Calu3 (cell line): ENCODE measurements at regions of chr9 and their contacts with region 1.

Region 1: DNA sequence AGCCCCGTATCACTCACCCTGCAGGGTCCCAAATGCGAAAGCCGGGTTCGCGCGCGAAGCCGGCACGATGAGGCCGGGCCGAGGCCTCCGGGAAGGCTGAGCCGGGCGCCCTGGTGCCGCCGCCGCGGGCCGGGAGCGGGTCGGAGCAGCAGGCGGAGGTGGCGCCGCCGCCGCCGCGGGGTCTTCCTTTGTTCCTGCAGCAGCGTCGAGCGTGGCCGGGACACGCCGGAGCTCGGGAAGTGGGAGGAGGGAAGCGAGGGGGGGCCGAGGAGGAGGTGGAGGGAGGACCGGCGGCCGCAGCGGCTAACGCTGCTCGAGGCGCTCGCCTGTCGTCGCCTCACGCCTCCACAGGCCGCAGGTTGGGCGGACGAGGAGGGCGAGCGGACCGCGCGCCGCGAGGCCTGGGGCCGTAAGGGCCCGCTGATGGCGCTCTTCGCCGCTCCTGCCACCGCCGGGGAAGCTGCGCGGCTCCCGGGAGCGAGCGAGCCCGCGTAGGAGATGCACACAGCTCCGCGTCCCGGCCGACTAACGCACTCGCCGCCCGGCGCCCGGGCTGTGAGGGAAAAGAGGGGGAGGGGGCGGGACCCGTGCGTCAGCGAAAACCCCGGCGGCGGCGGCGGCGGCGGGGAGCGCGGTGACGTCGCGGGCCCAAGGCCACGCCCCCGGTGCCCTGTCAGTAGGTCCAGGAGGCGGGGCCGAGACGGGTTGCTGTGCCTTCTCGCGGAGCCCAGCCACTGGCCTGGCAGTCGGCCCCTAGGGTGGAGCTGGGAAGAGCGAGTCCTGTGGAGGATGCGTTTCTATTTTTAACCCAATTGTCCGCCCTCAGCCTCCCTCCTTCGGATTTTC is at the start of gene ZFAND5:
- DNase-seq: peak; percentile 94
- H3K4me3 Mint-ChIP-seq: peak within 1 kb of the TSS; percentile 94
- H3K27ac Mint-ChIP-seq: peak within 1 kb of the TSS; percentile 99
- H3K4me1 Mint-ChIP-seq: no peaks in the 10 kb centered on the region
- H3K27me3 Mint-ChIP-seq: no peaks in the 10 kb centered on the region
- CTCF ChIP-seq: no peak
- total RNA-seq, gene ZFAND5: 113 and 115 TPM in 2 replicates

Region 2: GRCh38 chr9:72292256-72292682 is 72.6 kb before region 1 on chr9:
- CTCF ChIA-PET with region 1: interaction called, 8 read pairs
- intact Hi-C with region 1: loop called (anchors 1 kb)
- DNase-seq: peak; percentile 12
- H3K4me3 Mint-ChIP-seq: peak overlapping the region; percentile 50
- H3K27ac Mint-ChIP-seq: peak overlapping the region; percentile 97
- H3K4me1 Mint-ChIP-seq: peaks cover 33% of the 10 kb centered on the region
- H3K27me3 Mint-ChIP-seq: no peaks in the 10 kb centered on the region
- CTCF ChIP-seq: no peak

Region 3: GRCh38 chr9:72379121-72379520 is 14.2 kb after region 1 on chr9:
- CTCF ChIA-PET with region 1: no interaction called
- intact Hi-C with region 1: no loop called
- DNase-seq: no peak
- H3K4me3 Mint-ChIP-seq: no peak overlapping the region
- H3K27ac Mint-ChIP-seq: no peak overlapping the region
- H3K4me1 Mint-ChIP-seq: no peaks in the 10 kb centered on the region
- H3K27me3 Mint-ChIP-seq: no peaks in the 10 kb centered on the region
- CTCF ChIP-seq: no peak

Region 4: GRCh38 chr9:72526901-72527800 is 162.2 kb after region 1 on chr9:
- CTCF ChIA-PET with region 1: interaction called, 3 read pairs
- intact Hi-C with region 1: loop called (anchors 5 kb)
- DNase-seq: peak; percentile 77
- H3K4me3 Mint-ChIP-seq: peak overlapping the region; percentile 49
- H3K27ac Mint-ChIP-seq: peak overlapping the region; percentile 70
- H3K4me1 Mint-ChIP-seq: peaks cover 27% of the 10 kb centered on the region
- H3K27me3 Mint-ChIP-seq: no peaks in the 10 kb centered on the region
- CTCF ChIP-seq: no peak

Region 5: DNA sequence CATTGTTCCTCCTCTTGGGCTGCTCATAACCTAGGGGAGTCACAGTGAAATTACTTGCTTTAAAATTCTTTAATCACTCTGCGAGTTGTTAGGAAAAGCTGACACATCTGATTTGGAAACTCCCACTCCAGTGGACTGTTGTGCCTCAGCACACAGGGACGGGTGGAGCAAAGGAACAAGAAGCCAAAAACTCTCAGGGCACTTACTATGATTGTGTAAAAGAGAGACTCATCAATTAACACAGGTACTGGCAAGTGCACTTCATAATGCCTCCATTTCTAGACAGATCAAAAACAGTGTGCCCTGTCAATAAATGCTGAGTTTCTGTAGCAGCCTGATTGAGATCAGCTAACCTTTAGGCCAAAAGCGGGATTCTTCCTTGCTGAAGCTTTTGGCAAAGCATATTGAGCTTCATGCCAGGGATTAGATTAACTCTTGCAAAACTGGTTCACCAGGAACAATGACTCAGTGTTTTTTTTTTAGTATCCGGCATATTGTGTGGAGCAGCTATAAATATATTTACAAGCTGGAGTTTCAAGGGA is 212.4 kb after region 1 on chr9:
- CTCF ChIA-PET with region 1: interaction called, 5 read pairs
- intact Hi-C with region 1: loop called (anchors 5 kb)
- DNase-seq: no peak
- H3K4me3 Mint-ChIP-seq: peak overlapping the region; percentile 9
- H3K27ac Mint-ChIP-seq: peak overlapping the region; percentile 84
- H3K4me1 Mint-ChIP-seq: peaks cover 63% of the 10 kb centered on the region
- H3K27me3 Mint-ChIP-seq: no peaks in the 10 kb centered on the region
- CTCF ChIP-seq: no peak

Region 6: GRCh38 chr9:72592502-72593403 is 227.9 kb after region 1 on chr9:
- CTCF ChIA-PET with region 1: interaction called, 3 read pairs
- intact Hi-C with region 1: loop called (anchors 5 kb)
- DNase-seq: peak; percentile 7
- H3K4me3 Mint-ChIP-seq: no peak overlapping the region
- H3K27ac Mint-ChIP-seq: no peak overlapping the region
- H3K4me1 Mint-ChIP-seq: peaks cover 30% of the 10 kb centered on the region
- H3K27me3 Mint-ChIP-seq: no peaks in the 10 kb centered on the region
- CTCF ChIP-seq: peak; percentile 43

Region 7: GRCh38 chr9:72753266-72753893 is 388.5 kb after region 1 on chr9:
- CTCF ChIA-PET with region 1: no interaction called
- intact Hi-C with region 1: loop called (anchors 5 kb)
- DNase-seq: peak; percentile 17
- H3K4me3 Mint-ChIP-seq: no peak overlapping the region
- H3K27ac Mint-ChIP-seq: no peak overlapping the region
- H3K4me1 Mint-ChIP-seq: peaks cover 12% of the 10 kb centered on the region
- H3K27me3 Mint-ChIP-seq: no peaks in the 10 kb centered on the region
- CTCF ChIP-seq: no peak